K562 (cell line): ENCODE measurements at regions of chr7 and their contacts with region 1.

Region 1: DNA sequence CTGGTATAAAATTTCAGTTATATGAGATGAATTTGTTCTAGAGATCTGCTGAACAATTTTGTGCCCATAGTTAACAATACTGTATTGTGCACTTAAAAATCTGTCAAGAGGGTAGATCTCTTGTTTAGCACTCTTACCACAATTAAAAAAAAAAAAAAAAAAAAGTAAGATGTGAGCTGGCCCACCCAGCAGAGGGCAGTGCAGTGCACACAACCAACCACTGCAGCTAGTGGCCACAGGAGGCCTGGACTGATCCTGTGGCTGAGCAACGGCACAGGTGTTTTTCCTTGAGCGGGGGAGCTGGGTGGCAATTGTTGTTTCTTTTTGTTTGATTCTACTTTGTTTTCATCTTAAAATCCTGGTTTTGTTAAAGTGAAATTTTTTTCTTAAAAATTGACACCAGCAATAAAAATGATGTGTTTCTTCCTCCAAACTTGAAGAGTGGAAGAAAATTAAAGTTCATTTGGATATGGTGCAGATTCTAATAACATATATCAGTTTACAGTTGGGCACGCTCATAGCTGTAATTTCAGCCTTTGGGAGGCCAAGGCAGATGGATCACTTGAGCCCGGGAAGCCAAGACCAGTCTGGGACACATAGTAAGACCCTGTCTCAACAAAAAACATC is 171.1 kb upstream of the TBX20 start:
- DNase-seq: peak; percentile 58 to 67 (median 66)
- ATAC-seq: peak; percentile 90
- H3K4me3 ChIP-seq: no peak overlapping the region
- H3K27ac ChIP-seq: no peak overlapping the region
- H3K4me1 ChIP-seq: no peaks in the 10 kb centered on the region
- H3K27me3 ChIP-seq: peaks cover 0 to under 1% of the 10 kb centered on the region in 2 experiments; a peak in 1 of 5 replicates
- CTCF ChIP-seq: peak; percentile 68 to 98 (median 90); a peak in 5 of 6 replicates
- EP300 ChIP-seq: no peak
- POLR2A ChIP-seq: no peak
- RAD21 ChIP-seq: peak; percentile 38 to 60

Region 2: DNA sequence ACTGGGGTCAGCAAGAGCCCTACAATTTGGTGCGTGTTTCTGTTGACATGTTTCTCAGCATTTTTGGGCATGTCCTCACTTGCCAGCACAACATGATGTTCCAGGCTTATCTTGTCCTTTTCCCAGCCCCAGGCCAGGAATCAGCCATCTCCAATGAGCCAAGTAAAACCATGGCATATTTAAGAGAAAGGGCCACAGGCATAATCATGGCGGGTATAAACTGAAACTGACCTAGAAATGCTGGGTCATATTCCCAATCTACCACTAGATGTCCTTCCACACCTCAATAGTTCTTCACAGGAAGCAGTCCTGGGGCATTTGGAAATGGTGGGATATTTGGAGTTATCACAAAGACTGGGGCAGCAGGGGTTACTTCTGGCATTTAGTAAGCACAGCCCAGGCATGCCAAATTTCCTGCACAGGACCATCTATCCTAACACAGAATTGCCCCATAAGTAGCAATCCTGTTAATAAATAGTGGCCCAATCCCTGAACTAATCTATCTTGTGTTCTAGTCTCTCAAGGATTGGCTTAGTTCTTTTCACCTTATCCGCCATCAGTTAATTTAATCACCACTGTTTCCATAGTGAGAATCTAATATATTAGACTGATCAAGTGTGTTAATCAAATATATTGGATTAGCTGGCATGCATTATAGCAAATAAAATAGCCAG is 665.4 kb before region 1 on chr7:
- CTCF ChIA-PET with region 1: no interaction called
- POLR2A ChIA-PET with region 1: no interaction called
- in situ Hi-C with region 1: no loop called
- intact Hi-C with region 1: loop called (anchors 5 kb)
- DNase-seq: peak; percentile 30 to 35 (median 34)
- ATAC-seq: peak; percentile 90
- H3K4me3 ChIP-seq: no peak overlapping the region
- H3K27ac ChIP-seq: no peak overlapping the region
- H3K4me1 ChIP-seq: no peaks in the 10 kb centered on the region
- H3K27me3 ChIP-seq: no peaks in the 10 kb centered on the region
- CTCF ChIP-seq: peak; percentile 43 to 57 (median 50); a peak in 5 of 6 replicates
- EP300 ChIP-seq: no peak
- POLR2A ChIP-seq: no peak
- RAD21 ChIP-seq: peak; percentile 30 to 65; a peak in 3 of 4 replicates

Region 3: GRCh38 chr7:35331730-35332678 is 93.0 kb before region 1 on chr7:
- CTCF ChIA-PET with region 1: no interaction called
- POLR2A ChIA-PET with region 1: no interaction called
- in situ Hi-C with region 1: no loop called
- intact Hi-C with region 1: no loop called
- DNase-seq: peak in 2 of 4 experiments; percentile 11 to 44
- ATAC-seq: peak; percentile 36; the same call in 2 of the 3 replicates
- H3K4me3 ChIP-seq: no peak overlapping the region
- H3K27ac ChIP-seq: no peak overlapping the region
- H3K4me1 ChIP-seq: no peaks in the 10 kb centered on the region; a peak in 1 of 5 replicates
- H3K27me3 ChIP-seq: no peaks in the 10 kb centered on the region
- CTCF ChIP-seq: no peak
- EP300 ChIP-seq: no peak
- POLR2A ChIP-seq: no peak
- RAD21 ChIP-seq: no peak

Region 4: GRCh38 chr7:35356495-35356894 is 68.5 kb before region 1 on chr7:
- CTCF ChIA-PET with region 1: no interaction called
- POLR2A ChIA-PET with region 1: no interaction called
- in situ Hi-C with region 1: no loop called
- intact Hi-C with region 1: no loop called
- DNase-seq: no peak
- ATAC-seq: no peak
- H3K4me3 ChIP-seq: no peak overlapping the region
- H3K27ac ChIP-seq: no peak overlapping the region
- H3K4me1 ChIP-seq: no peaks in the 10 kb centered on the region
- H3K27me3 ChIP-seq: no peaks in the 10 kb centered on the region
- CTCF ChIP-seq: no peak
- EP300 ChIP-seq: no peak
- POLR2A ChIP-seq: no peak
- RAD21 ChIP-seq: no peak

Region 5: DNA sequence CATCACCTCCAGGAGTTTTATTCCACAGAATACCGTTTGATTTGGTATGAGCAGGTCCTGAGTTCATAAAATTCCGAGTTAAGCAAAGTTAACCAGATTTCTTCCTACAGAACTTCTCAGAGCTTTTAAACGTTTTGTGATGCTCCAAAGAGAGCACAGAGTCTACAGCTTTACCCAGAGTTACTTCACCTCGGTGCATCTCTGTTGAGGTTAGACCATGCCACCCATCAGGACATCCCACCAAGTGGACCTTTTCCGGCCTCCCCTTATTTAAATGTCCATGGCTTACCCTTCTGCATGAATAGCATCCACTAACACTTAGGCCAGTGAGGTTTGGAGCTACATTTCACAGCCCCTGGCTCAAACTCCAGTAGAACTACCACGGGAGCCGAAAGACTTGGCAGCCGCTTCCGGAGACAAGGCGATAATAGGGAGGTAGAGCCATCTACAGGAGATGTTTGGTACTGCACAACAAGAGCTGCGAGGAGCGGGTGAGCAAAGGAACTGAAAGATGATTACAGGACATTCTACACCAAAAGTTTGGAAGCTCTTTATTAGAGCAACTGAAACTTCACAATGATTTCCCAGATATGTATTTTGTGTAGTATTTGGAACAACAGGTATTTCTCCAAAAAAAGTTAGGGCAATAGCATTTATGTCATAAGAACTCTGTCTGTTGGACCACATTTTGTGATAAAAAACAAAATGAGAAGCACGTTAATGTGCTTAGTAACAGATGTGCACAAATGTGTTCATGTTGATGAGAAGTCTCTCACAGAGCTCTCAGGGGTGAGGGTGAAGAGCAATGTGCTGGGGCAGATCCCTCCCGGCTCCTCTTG is 95.2 kb after region 1 on chr7:
- CTCF ChIA-PET with region 1: no interaction called
- POLR2A ChIA-PET with region 1: no interaction called
- in situ Hi-C with region 1: no loop called
- intact Hi-C with region 1: loop called (anchors 1 kb)
- DNase-seq: peak; percentile 73 to 75 (median 74)
- ATAC-seq: peak; percentile 93
- H3K4me3 ChIP-seq: no peak overlapping the region
- H3K27ac ChIP-seq: no peak overlapping the region
- H3K4me1 ChIP-seq: no peaks in the 10 kb centered on the region
- H3K27me3 ChIP-seq: no peaks in the 10 kb centered on the region
- CTCF ChIP-seq: peak; percentile 77 to 86 (median 81)
- EP300 ChIP-seq: no peak
- POLR2A ChIP-seq: no peak
- RAD21 ChIP-seq: peak; percentile 57 to 76

Region 6: GRCh38 chr7:35537067-35538023 is 112.4 kb after region 1 on chr7:
- CTCF ChIA-PET with region 1: interaction called, 3 read pairs
- POLR2A ChIA-PET with region 1: interaction called, 3 read pairs
- in situ Hi-C with region 1: no loop called
- intact Hi-C with region 1: loop called (anchors 1 kb)
- DNase-seq: peak; percentile 82 to 86 (median 84)
- ATAC-seq: peak; percentile 100
- H3K4me3 ChIP-seq: 0 out of 2 replicates have a peak overlapping the region, but pooled peaks have one; percentile 18
- H3K27ac ChIP-seq: no peak overlapping the region
- H3K4me1 ChIP-seq: peaks cover 0 to 5% of the 10 kb centered on the region in 2 experiments; a peak in 1 of 5 replicates
- H3K27me3 ChIP-seq: peaks cover 9 to 21% of the 10 kb centered on the region in 2 experiments; a peak in 4 of 5 replicates
- CTCF ChIP-seq: peak; percentile 90 to 93 (median 91)
- EP300 ChIP-seq: no peak
- POLR2A ChIP-seq: no peak
- RAD21 ChIP-seq: peak; percentile 89 to 91

Region 7: DNA sequence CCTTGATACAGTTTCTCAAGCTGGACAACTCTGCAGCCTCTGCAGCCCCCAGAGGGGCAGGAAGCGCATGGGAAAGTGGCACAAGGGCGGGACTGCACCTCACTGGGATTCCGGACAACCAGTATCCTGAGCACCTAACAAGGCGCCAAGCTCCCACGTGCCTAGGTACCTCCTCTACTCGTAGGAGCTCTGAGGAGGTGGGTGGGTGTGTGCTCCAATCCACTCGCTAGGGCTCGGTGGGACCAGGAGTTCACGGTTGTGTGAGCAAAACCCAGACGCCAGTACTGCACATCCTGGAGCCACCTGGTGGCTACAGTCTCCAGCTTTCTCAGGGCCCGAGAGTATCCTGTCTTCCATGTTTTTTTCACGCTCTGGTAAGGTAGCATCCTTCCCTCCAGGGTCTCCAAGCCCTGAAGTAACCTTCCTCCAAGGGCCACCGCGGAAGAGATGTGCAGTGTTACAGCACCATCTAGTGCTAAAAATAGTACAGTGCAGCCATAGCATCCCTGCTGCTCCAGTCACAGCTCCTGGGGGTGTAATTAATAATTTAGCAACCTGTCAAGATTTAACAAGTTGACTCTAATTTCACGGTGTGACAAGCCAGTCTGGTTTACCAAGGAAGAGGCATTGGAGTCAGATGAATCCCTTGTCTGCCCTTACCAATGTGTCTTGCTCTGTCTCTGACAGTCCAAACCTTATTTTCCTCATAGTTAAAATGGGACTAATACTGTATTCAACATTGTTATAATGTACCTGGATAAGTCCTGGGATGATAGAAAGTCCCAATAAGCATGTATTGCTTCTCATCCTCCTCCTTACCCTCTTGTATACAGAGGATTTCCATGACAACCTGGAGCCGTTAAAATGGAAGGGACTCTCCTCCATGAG is 199.6 kb after region 1 on chr7:
- CTCF ChIA-PET with region 1: interaction called, 10 read pairs
- POLR2A ChIA-PET with region 1: no interaction called
- in situ Hi-C with region 1: no loop called
- intact Hi-C with region 1: loop called (anchors 1 kb)
- DNase-seq: peak; percentile 65 to 72 (median 70)
- ATAC-seq: peak; percentile 97
- H3K4me3 ChIP-seq: no peak overlapping the region
- H3K27ac ChIP-seq: no peak overlapping the region
- H3K4me1 ChIP-seq: no peaks in the 10 kb centered on the region
- H3K27me3 ChIP-seq: peaks cover 2 to 8% of the 10 kb centered on the region in 2 experiments; a peak in 2 of 5 replicates
- CTCF ChIP-seq: peak; percentile 81 to 89 (median 88)
- EP300 ChIP-seq: no peak
- POLR2A ChIP-seq: no peak
- RAD21 ChIP-seq: peak; percentile 78 to 84